ENCODE measurements at regions of chr1 and their contacts with region 1.

Region 1: DNA sequence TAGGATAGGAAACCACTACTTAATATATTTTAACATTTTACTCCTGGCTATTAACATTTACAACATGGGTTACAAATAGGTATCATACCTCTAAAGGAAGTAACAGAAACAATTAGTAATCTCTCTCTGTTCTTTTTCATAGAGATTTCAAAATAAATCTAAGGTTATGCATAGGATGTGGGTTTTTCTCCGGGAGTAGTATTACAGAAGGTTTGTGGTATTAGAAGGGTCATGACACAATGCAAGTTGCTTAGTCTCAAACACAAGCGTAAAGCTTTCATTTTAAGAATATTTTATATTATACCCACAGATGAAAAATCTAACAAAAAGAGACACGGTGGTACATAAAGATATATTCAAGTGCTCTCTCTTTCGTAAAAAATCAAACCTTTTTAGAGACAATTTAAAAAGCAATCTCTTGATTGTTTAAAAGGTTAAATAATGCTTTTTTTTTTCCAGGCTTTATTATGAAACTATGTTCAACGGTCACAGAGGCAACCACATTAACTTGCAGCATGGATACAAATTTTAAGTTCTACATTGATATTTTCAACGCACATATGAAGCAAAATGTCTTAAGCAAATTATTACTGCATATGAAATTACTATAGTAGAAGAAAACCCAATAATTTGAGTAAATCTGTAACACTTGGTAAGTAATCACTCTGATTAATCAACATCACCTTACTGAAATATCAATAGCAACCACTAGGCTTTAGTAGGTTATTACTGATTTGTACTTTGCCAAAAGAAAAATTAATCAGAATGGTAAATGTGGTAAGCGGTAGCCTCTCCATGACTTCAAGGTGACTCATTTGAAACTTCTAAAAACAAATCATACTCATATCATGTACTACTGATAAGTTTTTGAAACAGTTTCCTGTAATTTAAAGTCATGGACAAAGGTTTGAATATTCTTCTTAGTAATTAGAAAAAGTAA is 97.4 kb upstream of the GFI1 start:
- DNase-seq: peak in 1 of 2 donors; percentile 70
- ATAC-seq: peak; percentile 85 to 96 (median 89)
- H3K4me3 ChIP-seq: peak overlapping the region; percentile 10
- H3K4me3 Mint-ChIP-seq: peak overlapping the region; percentile 76
- H3K27ac ChIP-seq: peak overlapping the region; percentile 64
- H3K27ac Mint-ChIP-seq: peak overlapping the region; percentile 86 to 88
- H3K4me1 ChIP-seq: peaks cover 12% of the 10 kb centered on the region
- H3K4me1 Mint-ChIP-seq: peaks cover 20% of the 10 kb centered on the region in 2 donors
- H3K27me3 ChIP-seq: no peaks in the 10 kb centered on the region
- H3K27me3 Mint-ChIP-seq: no peaks in the 10 kb centered on the region
- CTCF ChIP-seq: no peak

Region 2: DNA sequence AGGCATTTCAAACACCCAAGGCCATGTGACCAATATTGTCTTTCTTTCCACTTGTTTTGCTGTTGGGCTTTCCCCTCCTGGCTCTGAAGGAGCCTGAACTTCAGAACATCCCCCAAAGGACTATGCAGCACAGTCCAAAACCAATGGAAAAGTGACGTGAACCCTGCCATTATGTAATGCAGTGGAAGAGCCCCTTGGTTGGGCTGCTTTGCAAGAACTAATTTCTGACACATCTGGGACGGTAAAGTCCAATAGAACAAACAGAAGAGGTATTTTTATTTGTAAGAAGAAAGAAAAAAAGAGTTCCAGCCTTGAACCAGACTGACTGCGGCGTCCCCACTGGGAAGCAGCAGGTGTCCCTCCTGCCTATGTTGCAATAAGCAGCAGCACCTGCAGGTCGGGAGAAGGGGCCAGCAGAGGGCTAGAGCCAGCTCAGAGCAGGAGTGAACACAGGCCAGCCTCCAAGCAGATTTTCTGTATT is 966.8 kb before region 1 on chr1:
- intact Hi-C with region 1: no loop called
- DNase-seq: peak in 1 of 2 donors; percentile 37
- ATAC-seq: no peak
- H3K4me3 ChIP-seq: no peak overlapping the region
- H3K4me3 Mint-ChIP-seq: no peak overlapping the region
- H3K27ac ChIP-seq: no peak overlapping the region
- H3K27ac Mint-ChIP-seq: no peak overlapping the region
- H3K4me1 ChIP-seq: peaks cover 3% of the 10 kb centered on the region
- H3K4me1 Mint-ChIP-seq: peaks cover 25 to 28% of the 10 kb centered on the region in 2 donors
- H3K27me3 ChIP-seq: no peaks in the 10 kb centered on the region
- H3K27me3 Mint-ChIP-seq: no peaks in the 10 kb centered on the region
- CTCF ChIP-seq: no peak

Region 3: GRCh38 chr1:92367496-92367895 is 216.6 kb before region 1 on chr1:
- intact Hi-C with region 1: loop called (anchors 2 kb)
- DNase-seq: peak in 1 of 2 donors; percentile 21
- ATAC-seq: peak; percentile 44 to 52 (median 48)
- H3K4me3 ChIP-seq: no peak overlapping the region
- H3K4me3 Mint-ChIP-seq: peak overlapping the region; percentile 21
- H3K27ac ChIP-seq: no peak overlapping the region
- H3K27ac Mint-ChIP-seq: peak overlapping the region; percentile 46 to 74
- H3K4me1 ChIP-seq: peaks cover 11% of the 10 kb centered on the region
- H3K4me1 Mint-ChIP-seq: peaks cover 40 to 41% of the 10 kb centered on the region in 2 donors
- H3K27me3 ChIP-seq: no peaks in the 10 kb centered on the region
- H3K27me3 Mint-ChIP-seq: no peaks in the 10 kb centered on the region
- CTCF ChIP-seq: no peak